PC-3 (cell line): ENCODE measurements at regions of chr2 and their contacts with region 1.

Region 1: DNA sequence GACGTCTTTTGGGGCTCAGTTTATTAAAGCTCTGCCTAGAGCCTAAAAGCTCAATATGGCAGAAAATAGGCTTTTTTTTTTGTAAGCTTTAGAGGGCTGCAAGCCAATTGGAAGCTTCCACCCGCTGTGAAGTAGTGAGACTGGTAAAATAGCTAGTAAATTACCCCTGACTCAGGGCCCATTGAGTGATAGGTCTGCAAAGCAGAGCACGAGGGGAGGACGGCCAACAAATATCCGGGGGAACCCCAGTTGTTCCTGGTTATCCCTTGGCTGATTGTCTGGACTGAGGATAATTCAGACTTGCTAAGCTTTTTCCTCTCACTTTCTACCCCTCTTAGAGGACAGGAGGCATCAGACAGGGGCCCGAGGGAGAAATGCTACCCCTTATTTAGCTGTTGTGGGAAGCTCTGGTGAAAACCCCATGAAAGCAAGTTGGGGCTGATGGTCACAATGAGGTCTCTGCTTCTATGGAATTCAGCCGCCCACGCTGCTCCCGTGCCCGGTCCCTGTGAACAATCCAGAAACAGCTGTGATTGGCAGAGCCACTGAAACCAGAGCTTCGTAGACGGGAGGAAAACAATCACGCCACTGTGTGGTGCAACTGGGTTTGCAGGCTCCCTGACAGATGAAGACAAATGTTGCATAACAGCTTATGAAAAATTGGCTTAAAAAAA is 141.9 kb upstream of the LGALSL start:
- DNase-seq: peak; percentile 88
- ATAC-seq: peak; percentile 99
- H3K4me3 ChIP-seq: peak overlapping the region; percentile 24; the same call in 1 of the 2 replicates
- H3K27ac ChIP-seq: no peak overlapping the region
- H3K4me1 ChIP-seq: peaks cover 10% of the 10 kb centered on the region
- H3K27me3 ChIP-seq: no peaks in the 10 kb centered on the region
- CTCF ChIP-seq: peak; percentile 74

Region 2: DNA sequence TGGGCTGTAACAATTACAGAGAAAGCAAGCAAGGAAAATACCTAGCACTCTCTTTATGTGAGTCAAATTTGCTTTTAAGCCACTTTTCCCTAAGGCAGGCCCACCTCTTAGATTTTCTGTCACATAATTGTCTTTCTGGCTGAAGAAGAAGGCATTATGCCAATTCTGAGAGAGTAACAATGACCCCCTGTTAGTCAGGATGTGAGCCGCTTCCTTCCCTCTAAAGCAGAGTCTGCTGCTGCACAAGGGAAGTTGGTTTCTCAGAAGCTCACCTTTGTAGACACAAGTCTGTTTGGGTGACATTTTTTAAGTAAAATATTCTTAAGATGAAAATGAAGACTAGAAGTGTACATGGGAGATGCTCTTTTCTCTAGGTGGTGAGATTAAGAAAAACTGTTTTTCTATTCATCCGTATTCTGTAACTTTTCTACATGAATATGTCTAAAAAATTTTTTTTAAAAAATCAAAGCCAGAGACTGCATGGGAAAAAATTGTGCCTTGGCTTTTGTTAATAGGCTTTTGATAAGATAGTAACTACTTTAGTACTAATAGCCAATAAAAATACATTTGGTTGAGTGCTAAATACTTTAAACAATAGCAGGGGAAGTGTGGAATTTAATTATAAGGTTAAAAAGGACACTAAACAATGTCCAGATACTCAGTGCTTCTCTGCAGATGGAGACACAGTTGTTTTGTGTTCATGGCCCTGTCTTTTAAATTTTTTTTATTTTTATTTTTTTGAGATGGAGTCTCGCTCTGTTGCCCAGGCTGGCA is 259.4 kb before region 1 on chr2:
- CTCF ChIA-PET with region 1: interaction called, 19 read pairs
- POLR2A ChIA-PET with region 1: no interaction called
- intact Hi-C with region 1: loop called (anchors 1 kb)
- DNase-seq: peak; percentile 59
- ATAC-seq: peak; percentile 11; the same call in 1 of the 2 replicates
- H3K4me3 ChIP-seq: no peak overlapping the region
- H3K27ac ChIP-seq: no peak overlapping the region
- H3K4me1 ChIP-seq: peaks cover 4% of the 10 kb centered on the region; the same call in 1 of the 2 replicates
- H3K27me3 ChIP-seq: no peaks in the 10 kb centered on the region
- CTCF ChIP-seq: no peak

Region 3: GRCh38 chr2:64144057-64145013 is 167.8 kb before region 1 on chr2 and contains the start of gene PELI1:
- CTCF ChIA-PET with region 1: no interaction called
- POLR2A ChIA-PET with region 1: no interaction called
- intact Hi-C with region 1: loop called (anchors 1 kb)
- DNase-seq: peak; percentile 97
- ATAC-seq: peak; percentile 89
- H3K4me3 ChIP-seq: peak within 1 kb of the TSS; percentile 90
- H3K27ac ChIP-seq: no peak within 1 kb of the TSS
- H3K4me1 ChIP-seq: peaks cover 18% of the 10 kb centered on the region; the same call in 1 of the 2 replicates
- H3K27me3 ChIP-seq: no peaks in the 10 kb centered on the region
- CTCF ChIP-seq: peak; percentile 21; the same call in 1 of the 2 replicates
- total RNA-seq, gene PELI1: 5.6 and 10.4 TPM in 2 replicates

Region 4: DNA sequence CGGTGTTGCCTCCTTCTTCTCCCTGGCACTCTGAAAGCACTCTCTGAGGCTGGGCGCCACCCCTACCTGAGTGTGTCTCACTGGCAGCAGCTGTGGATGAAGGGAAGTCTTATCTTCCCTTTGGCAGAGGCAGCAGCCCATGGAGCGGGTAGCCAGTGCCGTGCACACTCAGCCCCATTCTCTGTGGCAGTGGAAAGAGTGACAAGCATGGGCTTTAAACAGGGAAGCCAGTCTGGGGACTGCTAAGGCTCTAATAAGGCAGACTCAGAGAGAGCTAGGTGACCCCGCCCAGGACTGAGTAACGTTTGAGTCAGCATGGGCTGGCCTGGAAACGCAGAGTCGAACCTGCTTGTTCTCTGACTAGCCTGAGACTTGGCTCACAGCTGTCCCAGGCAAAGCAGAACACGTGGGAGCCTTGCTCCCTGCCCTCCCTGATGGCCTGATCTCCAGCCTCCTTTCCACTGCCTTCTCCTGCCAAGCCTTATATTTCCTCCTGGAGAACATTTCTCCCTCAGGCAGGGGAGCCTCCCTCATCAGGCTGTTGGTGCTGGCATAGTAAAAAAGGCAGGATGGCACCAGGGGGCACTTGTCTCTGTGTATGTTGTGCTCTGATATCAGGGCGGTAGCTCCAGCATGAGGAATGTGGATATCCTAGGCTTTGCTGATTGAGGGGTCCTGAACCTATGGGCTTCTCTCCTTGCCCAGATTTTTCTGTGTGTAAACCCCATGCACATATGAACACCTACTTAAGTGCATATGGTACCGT is 48.0 kb after region 1 on chr2:
- CTCF ChIA-PET with region 1: no interaction called
- POLR2A ChIA-PET with region 1: no interaction called
- intact Hi-C with region 1: no loop called
- DNase-seq: peak; percentile 99
- ATAC-seq: peak; percentile 94
- H3K4me3 ChIP-seq: peak overlapping the region; percentile 35; the same call in 1 of the 2 replicates
- H3K27ac ChIP-seq: peak overlapping the region; percentile 91
- H3K4me1 ChIP-seq: peaks cover 59% of the 10 kb centered on the region
- H3K27me3 ChIP-seq: no peaks in the 10 kb centered on the region
- CTCF ChIP-seq: peak; percentile 36; the same call in 1 of the 2 replicates

Region 5: DNA sequence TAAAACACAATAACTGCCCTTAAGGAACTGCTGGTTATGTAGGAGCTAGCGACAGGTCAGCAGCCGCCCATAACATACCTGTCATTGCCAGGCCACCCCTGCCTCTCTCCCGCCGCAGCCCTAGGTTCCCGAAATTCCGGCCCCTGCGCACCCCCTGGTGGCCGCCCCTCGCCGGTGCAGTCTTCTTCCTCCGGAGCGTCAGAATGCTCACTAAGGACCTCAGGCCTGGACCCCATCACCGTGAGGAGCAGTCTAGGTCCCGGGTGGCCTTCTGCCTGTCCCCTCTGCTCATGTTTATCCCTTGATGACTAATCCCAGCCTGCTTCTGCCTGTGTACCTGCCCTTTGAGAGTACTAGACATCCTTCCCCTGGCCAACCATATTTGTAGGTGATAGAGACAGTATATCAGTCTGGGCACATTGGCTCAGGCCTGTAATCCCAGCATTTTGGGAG is 561.4 kb after region 1 on chr2:
- CTCF ChIA-PET with region 1: interaction called, 17 read pairs
- POLR2A ChIA-PET with region 1: no interaction called
- intact Hi-C with region 1: no loop called
- DNase-seq: peak; percentile 86
- ATAC-seq: peak; percentile 73
- H3K4me3 ChIP-seq: no peak overlapping the region
- H3K27ac ChIP-seq: no peak overlapping the region
- H3K4me1 ChIP-seq: peaks cover 21% of the 10 kb centered on the region
- H3K27me3 ChIP-seq: no peaks in the 10 kb centered on the region
- CTCF ChIP-seq: peak; percentile 96